Dendritic cell treated with granulocyte-macrophage colony-stimulating factor and Interleukin-4, amounts not matched to agents 40 ng/mL and 50 ng/mL, for 4 days (primary cell): ENCODE measurements at regions of chr4 and their contacts with region 1.

Region 1: GRCh38 chr4:76067652-76068286 is 6.7 kb upstream of the ART3 start:
- H3K4me3 Mint-ChIP-seq: no peak overlapping the region
- H3K27ac Mint-ChIP-seq: no peak overlapping the region
- H3K4me1 Mint-ChIP-seq: no peaks in the 10 kb centered on the region
- H3K27me3 Mint-ChIP-seq: no peaks in the 10 kb centered on the region

Region 2: GRCh38 chr4:75895744-75896314 is 171.9 kb before region 1 on chr4:
- intact Hi-C with region 1: loop called (anchors 5 kb)
- H3K4me3 Mint-ChIP-seq: no peak overlapping the region
- H3K27ac Mint-ChIP-seq: no peak overlapping the region
- H3K4me1 Mint-ChIP-seq: no peaks in the 10 kb centered on the region
- H3K27me3 Mint-ChIP-seq: no peaks in the 10 kb centered on the region

Region 3: DNA sequence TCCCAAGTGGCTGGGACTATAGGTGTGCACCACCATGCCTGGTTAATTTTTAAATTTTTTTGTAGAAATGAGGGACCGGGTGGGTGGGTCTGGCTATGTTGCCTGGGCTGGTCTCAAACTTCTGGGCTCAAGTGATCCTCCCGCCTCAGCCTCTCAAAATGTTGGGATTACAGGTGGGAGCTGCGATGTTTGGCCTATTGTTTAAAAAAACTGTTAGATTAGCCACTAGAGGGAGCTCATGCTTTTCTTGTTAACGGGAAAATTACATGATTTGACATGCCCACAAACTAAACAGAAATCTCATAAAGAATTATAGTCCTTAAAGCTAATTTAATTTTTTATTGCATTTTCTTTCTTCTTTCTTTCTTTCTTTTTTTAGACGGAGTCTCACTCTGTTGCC is 72.0 kb before region 1 on chr4:
- intact Hi-C with region 1: loop called (anchors 1 kb)
- H3K4me3 Mint-ChIP-seq: no peak overlapping the region
- H3K27ac Mint-ChIP-seq: no peak overlapping the region
- H3K4me1 Mint-ChIP-seq: no peaks in the 10 kb centered on the region
- H3K27me3 Mint-ChIP-seq: peaks cover 6% of the 10 kb centered on the region